ENCODE measurements at regions of chr6 and their contacts with region 1.

Region 1: DNA sequence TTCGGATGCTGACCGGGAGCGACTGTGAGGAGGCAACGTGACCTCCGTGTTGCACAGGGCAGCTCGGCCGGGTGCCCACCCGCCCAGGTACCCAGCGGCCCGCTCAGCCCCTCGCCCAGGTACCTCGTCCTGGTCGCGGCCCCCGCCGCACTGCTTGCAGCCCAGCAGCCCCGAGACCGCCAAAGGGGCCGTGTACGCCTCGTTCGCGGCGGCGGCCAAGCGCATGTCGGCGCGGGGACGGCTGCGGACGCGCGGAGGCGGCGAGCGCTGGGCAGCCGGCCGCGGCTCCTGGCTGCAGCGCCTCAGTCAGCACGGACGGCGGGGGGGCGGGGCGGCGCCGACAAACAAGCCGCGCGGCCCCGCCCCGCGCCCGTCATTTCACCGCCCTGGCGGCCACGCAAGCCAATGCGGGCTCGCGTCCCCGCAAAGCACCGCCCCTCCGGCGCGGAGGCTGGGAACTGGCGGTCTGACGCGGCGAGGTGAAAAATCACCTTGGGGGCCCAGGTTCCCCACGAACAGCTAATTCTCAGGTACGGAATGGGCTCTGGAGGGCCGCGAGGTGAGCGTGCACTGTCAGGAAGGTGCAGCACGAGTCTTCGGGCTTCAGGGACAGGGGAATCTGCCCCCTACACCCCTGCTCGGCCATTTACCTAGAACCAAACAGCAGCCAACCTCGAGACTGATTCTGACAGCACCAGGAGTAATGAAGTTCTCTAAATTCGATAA is 85.2 kb downstream of the SESN1 start:
- DNase-seq: peak; percentile 93 to 96
- ATAC-seq: peak; percentile 93 to 98 (median 96)
- H3K4me3 ChIP-seq: peak overlapping the region; percentile 67 to 98 (median 94)
- H3K27ac ChIP-seq: peak overlapping the region; percentile 91 to 98 (median 96)
- H3K4me1 ChIP-seq: peaks cover 0 to 74% (median 59%) of the 10 kb centered on the region in 9 donors
- H3K27me3 ChIP-seq: no peaks in the 10 kb centered on the region
- CTCF ChIP-seq: peak in 7 of 9 donors; percentile 11 to 52 (median 15)

Region 2: DNA sequence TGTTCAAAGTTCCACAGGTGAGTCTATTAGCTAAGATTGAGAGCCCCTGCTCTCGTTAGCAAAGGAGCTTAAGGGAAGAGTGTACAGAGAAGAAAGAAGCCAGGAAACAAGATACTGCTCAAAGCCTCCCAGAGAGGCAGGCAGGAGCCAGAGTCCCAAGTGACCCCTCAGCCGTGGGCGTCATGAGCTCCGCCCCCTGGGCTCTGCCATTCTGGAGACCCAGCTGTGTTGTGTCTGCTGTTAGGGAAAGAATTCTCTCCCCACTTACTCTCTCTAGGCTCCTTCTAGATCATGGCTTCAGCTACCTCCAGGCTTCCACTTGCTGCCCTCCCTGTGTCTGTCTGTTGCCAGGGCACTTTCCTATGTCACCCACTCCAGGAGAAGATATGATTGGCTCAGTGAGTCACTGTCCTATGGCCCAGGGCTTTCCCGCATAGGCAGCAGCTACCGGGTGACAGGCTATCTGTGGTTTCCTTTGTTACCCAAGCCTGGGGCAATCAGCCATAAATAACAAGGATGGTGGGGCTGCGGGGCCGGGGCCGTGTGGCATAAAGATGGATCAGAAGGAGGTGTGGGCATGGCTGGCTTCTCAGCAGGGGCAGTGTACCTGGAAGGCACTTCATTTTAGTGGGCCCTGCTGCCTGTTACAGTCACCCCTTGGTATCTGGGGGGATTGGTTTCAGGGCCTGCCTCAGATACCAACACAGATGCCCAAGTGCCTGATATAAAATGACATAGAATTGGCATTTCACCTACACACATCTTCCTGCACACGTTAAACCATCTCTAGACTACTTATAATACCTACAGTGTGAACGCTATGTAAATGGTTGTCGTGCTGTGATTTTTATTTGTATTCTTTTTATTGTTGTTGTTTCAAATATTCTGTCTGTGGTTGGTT is 42.3 kb before region 1 on chr6:
- intact Hi-C with region 1: loop called in 1 of 10 experiments (anchors 5 kb)
- DNase-seq: peak; percentile 50 to 62
- ATAC-seq: peak; percentile 59 to 92 (median 68)
- H3K4me3 ChIP-seq: no peak overlapping the region
- H3K27ac ChIP-seq: peak overlapping the region; percentile 68 to 84 (median 75)
- H3K4me1 ChIP-seq: peaks cover 5 to 53% (median 37%) of the 10 kb centered on the region in 9 donors
- H3K27me3 ChIP-seq: no peaks in the 10 kb centered on the region
- CTCF ChIP-seq: no peak

Region 3: GRCh38 chr6:109059571-109060021 is 50.2 kb after region 1 on chr6:
- intact Hi-C with region 1: loop called in 5 of 10 experiments (anchors 2 to 10 kb)
- DNase-seq: no peak
- ATAC-seq: peak; percentile 57 to 85 (median 82)
- H3K4me3 ChIP-seq: peak overlapping the region in 1 of 10 donors; percentile 12
- H3K27ac ChIP-seq: peak overlapping the region in 8 of 10 donors; percentile 2 to 67 (median 44)
- H3K4me1 ChIP-seq: peaks cover 7 to 63% (median 52%) of the 10 kb centered on the region in 9 donors
- H3K27me3 ChIP-seq: no peaks in the 10 kb centered on the region
- CTCF ChIP-seq: peak in 6 of 9 donors; percentile 29 to 55 (median 40)

Region 4: GRCh38 chr6:109373762-109374161 is 364.4 kb after region 1 on chr6:
- intact Hi-C with region 1: loop called in 1 of 10 experiments (anchors 10 kb)
- DNase-seq: no peak
- ATAC-seq: peak in 3 of 8 donors; percentile 18 to 53 (median 37)
- H3K4me3 ChIP-seq: no peak overlapping the region
- H3K27ac ChIP-seq: peak overlapping the region in 1 of 10 donors; percentile 51
- H3K4me1 ChIP-seq: peaks cover 0 to 68% (median 36%) of the 10 kb centered on the region in 9 donors
- H3K27me3 ChIP-seq: no peaks in the 10 kb centered on the region
- CTCF ChIP-seq: no peak

Measured in heart right ventricle (tissue), 16 donors.